Activated naive CD4-positive, alpha-beta T cell treated with anti-CD3 and anti-CD28 coated beads for 36 hours (primary cell): ENCODE measurements at regions of chr9 and their contacts with region 1.

Region 1: GRCh38 chr9:98101868-98102273 is 17.2 kb downstream of the TRIM14 start:
- DNase-seq: peak; percentile 90
- H3K4me3 Mint-ChIP-seq: peak overlapping the region; percentile 65
- H3K27ac Mint-ChIP-seq: peak overlapping the region; percentile 96
- H3K4me1 Mint-ChIP-seq: peaks cover 83% of the 10 kb centered on the region
- H3K27me3 Mint-ChIP-seq: no peaks in the 10 kb centered on the region

Region 2: DNA sequence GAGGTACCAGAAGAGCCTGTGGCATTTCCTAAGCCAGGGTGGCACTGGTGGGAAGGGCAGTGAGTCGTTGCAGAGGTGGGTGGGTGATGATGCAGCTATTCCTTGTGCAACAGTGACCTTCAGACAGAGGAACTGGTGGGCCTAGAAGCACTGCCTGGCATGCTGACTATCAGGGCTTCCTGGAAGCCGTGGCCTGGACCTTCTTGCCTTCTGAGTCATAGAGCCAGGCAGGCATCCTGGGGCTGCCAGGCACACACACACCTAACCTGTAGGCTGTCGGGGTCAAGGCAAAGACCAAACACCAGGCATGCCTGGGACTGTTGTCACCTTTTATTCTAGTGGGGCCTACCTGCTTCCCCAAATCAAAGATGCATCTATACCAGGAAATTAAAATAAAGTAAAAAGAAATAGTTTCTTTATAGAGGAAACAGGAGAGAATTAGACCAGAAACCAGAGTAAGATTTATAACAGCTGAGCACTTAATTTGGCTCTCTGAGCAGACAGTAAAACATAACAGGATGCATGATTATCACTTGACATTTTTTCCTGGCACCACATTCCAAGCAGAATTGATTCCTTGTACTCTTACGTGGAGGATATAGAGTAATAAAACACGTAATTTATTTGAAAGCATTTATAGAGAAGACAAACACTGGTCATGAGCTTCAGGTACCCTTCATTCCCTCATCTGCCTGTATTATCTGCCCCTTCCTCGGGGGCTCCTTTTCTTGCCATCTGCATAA is 20.2 kb before region 1 on chr9:
- CTCF ChIA-PET with region 1: no interaction called
- intact Hi-C with region 1: loop called (anchors 1 kb)
- DNase-seq: peak; percentile 78
- H3K4me3 Mint-ChIP-seq: no peak overlapping the region
- H3K27ac Mint-ChIP-seq: peak overlapping the region; percentile 88
- H3K4me1 Mint-ChIP-seq: peaks cover 41% of the 10 kb centered on the region
- H3K27me3 Mint-ChIP-seq: no peaks in the 10 kb centered on the region

Region 3: DNA sequence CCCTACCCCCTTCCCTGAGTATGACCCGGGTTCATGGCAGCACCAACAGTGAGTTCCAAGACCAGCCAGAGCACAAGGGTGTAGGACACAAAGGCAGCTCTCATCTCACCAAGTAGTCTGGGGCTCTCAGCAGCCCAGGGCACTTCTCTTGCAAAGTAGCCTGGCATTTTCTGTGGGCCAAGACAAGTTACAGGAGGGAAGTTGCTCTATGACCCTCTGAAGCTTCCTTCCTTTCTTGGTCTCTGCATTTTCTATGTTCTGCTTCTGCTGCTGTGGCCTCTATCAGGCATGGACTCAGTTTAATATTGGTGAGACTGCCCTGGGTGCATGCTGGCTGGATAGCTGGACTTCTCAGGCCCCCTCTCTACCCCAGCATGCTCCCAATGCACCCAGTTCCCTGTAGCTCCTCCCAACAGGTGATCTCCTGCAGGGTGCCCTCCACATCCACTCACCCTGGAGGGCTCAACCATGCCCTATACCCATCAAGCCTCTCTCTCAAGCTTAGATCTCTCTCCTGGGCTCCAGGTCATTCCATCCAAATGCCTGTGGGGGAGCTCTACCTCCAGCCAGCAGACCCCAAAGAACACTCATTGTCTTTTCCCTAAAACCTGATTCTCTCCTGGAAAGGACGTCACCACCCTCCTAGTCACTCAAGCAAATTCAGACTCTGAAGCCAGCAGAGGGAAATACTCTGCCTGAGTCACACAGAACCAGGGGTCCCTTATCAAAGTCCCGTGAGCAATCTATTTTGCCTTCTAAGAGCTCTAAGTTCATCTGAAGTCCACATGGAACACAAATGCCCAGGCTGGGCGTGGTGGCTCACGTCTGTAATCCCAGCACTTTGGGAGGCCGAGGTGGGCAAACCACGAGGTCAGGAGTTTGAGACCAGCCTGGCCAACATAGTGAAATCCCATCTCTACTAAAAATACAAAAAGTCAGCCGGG is 139.8 kb after region 1 on chr9:
- CTCF ChIA-PET with region 1: no interaction called
- intact Hi-C with region 1: no loop called
- DNase-seq: no peak
- H3K4me3 Mint-ChIP-seq: no peak overlapping the region
- H3K27ac Mint-ChIP-seq: no peak overlapping the region
- H3K4me1 Mint-ChIP-seq: no peaks in the 10 kb centered on the region
- H3K27me3 Mint-ChIP-seq: no peaks in the 10 kb centered on the region